Natural killer cell (primary cell): ENCODE measurements at regions of chr11 and their contacts with region 1.

Region 1: DNA sequence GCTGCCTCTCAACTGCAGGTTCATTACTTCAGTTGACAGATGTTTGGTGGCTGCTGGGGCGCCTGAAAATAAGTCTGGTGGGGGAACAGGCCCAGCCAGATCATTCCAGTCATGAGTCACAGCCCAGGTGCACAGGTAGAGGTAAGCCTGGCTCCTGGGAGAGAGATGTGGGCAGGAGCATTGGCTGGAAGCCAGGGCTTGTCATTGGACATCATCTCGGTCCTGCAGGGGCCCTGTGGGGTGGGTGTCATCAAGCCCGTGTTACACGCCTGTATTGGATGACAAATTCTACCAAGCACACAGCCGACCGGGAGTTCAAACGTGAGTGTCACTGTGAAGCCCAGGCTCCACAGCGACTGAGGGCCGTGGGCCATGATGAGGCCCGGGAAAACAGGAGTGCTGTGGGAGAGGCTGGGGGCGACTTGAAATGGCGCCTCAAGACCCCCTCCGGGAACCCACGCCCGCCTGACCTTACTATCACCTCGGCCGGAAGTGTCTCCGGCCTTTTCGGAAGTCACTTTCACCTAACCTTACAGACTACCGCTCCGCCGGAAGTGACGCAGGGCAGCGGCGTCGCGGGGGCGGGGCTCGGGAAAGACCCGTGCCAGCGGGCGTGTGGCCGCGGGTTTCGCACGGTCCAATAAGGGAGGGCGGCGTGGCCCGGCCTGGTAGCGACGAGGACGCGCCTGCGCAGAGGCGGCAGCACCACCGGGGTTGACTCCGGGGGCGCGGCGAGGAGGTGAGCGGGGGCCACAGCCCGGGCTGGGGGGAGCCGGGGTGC is at the start of gene FKBP2:
- DNase-seq: peak; percentile 98 to 99
- ATAC-seq: peak; percentile 65 to 84 (median 73)
- H3K4me3 ChIP-seq: peak within 1 kb of the TSS; percentile 79
- H3K4me3 Mint-ChIP-seq: peak within 1 kb of the TSS; percentile 96
- H3K27ac ChIP-seq: peak within 1 kb of the TSS; percentile 98
- H3K27ac Mint-ChIP-seq: peak within 1 kb of the TSS; percentile 98 to 99
- H3K4me1 ChIP-seq: peaks cover 66% of the 10 kb centered on the region
- H3K4me1 Mint-ChIP-seq: peaks cover 8 to 44% of the 10 kb centered on the region in 2 donors
- H3K27me3 ChIP-seq: no peaks in the 10 kb centered on the region
- H3K27me3 Mint-ChIP-seq: no peaks in the 10 kb centered on the region
- CTCF ChIP-seq: no peak
- total RNA-seq, gene FKBP2: 26.4 to 39.3 (median 30.3) TPM

Region 2: GRCh38 chr11:63961608-63962412 is 278.8 kb before region 1 on chr11:
- intact Hi-C with region 1: no loop called
- DNase-seq: peak; percentile 39 to 47
- ATAC-seq: peak; percentile 59 to 93 (median 85)
- H3K4me3 ChIP-seq: no peak overlapping the region
- H3K4me3 Mint-ChIP-seq: peak overlapping the region; percentile 75
- H3K27ac ChIP-seq: no peak overlapping the region
- H3K27ac Mint-ChIP-seq: peak overlapping the region in 1 of 2 donors; percentile 65
- H3K4me1 ChIP-seq: peaks cover 35% of the 10 kb centered on the region
- H3K4me1 Mint-ChIP-seq: peaks cover 21 to 27% of the 10 kb centered on the region in 2 donors
- H3K27me3 ChIP-seq: no peaks in the 10 kb centered on the region
- H3K27me3 Mint-ChIP-seq: peaks cover 0 to 6% of the 10 kb centered on the region in 2 donors
- CTCF ChIP-seq: no peak

Region 3: GRCh38 chr11:64185816-64186498 is 54.6 kb before region 1 on chr11 and contains the start of gene STIP1:
- intact Hi-C with region 1: loop called (anchors 1 kb)
- DNase-seq: peak; percentile 96 to 100
- ATAC-seq: peak; percentile 85 to 95 (median 86)
- H3K4me3 ChIP-seq: peak within 1 kb of the TSS; percentile 60
- H3K4me3 Mint-ChIP-seq: peak within 1 kb of the TSS; percentile 98
- H3K27ac ChIP-seq: peak within 1 kb of the TSS; percentile 66
- H3K27ac Mint-ChIP-seq: no peak within 1 kb of the TSS
- H3K4me1 ChIP-seq: peaks cover 20% of the 10 kb centered on the region
- H3K4me1 Mint-ChIP-seq: peaks cover 6 to 31% of the 10 kb centered on the region in 2 donors
- H3K27me3 ChIP-seq: no peaks in the 10 kb centered on the region
- H3K27me3 Mint-ChIP-seq: no peaks in the 10 kb centered on the region
- CTCF ChIP-seq: no peak
- total RNA-seq, gene STIP1: 80.9 to 110 (median 85.1) TPM

Region 4: DNA sequence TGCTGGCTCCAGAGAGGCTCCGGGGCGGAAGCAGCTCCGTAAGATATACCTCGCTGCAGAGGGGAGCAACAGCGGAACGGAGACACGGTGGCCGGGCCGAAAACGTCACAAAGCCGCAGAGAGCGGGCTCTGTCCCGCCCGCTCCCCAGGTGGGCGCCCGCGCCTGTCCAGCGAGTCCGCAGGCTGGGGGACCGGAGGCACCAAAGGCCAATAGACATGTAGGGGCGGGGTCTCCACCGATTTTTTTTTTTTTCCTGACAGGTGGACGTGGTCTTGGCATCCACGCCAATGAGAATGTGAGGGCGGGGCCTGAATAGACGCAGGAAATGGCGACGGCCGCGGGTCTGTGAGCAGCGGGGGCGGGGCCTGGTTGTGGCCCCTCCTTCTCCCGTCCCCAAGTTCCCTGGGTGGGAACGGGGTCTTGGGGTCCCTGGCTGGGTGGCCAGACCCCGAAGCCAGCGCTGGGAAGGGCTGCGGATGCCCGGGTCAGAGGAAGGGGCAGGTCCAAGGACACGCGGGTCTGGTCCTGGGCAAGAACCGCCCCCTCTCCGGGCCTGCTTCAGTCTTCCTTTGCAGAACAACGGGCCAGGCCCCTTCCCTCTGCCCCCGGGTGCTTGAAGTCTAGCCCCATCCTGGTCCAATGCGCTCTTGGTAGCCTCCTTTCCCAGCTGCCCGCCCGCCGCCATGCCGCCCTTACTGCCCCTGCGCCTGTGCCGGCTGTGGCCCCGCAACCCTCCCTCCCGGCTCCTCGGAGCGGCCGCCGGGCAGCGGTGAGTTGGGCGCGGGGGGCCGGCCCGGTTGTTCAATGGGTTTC is 10.2 kb before region 1 on chr11 and contains the start of gene DNAJC4:
- intact Hi-C with region 1: loop called (anchors 1 kb)
- DNase-seq: peak; percentile 86 to 92
- ATAC-seq: peak; percentile 64 to 78 (median 65)
- H3K4me3 ChIP-seq: peak within 1 kb of the TSS; percentile 93
- H3K4me3 Mint-ChIP-seq: peak within 1 kb of the TSS; percentile 94
- H3K27ac ChIP-seq: peak within 1 kb of the TSS; percentile 95
- H3K27ac Mint-ChIP-seq: peak within 1 kb of the TSS; percentile 93 to 97
- H3K4me1 ChIP-seq: peaks cover 66% of the 10 kb centered on the region
- H3K4me1 Mint-ChIP-seq: peaks cover 22 to 49% of the 10 kb centered on the region in 2 donors
- H3K27me3 ChIP-seq: no peaks in the 10 kb centered on the region
- H3K27me3 Mint-ChIP-seq: no peaks in the 10 kb centered on the region
- CTCF ChIP-seq: no peak
- total RNA-seq, gene DNAJC4: 45.0 to 47.0 (median 46.6) TPM

Region 5: DNA sequence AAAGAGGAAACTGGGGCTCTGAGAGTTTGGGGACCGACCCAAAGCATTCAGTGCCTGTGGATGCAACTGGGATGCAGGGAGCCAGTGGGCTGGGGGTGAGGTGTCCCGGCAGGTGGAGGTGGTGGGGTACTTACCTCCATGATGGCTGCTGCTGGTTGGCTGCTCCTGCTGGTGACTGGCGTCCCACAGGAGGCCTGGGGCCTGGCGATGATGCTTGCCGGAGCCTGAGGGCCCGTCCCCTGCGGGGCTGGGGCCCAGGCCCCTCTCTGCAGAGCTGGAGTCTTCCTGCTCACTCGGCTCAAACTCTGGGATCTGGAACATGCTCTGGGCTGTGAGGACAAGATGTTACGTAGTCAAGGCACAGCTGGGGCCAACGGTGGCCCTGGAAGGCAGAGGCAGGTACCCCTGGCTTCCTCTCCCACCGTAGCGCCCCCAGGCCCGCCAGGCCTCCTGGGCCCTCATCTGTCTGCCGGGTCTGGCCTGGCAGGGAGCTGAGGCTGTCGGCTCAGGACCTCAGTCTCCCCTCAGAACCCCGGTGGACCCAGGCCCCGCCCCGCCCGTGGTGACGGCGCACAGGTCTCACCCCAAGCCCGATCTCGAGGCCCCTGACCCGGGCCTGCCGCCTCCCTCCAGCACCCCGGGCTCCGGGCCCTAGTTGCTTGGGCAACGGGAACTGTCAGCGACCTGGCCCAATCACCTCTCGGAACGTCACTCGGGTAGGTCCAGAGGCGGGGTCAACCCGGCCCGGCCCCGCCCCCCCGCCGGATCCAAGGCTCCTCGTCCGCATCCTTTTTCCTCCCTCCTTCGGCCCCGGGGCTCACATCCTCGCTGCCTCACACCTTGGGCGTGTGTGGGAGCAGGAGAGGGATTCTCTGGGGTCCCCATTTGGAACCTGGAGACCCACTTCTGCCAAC is 43.7 kb after region 1 on chr11 and contains the start of gene BAD:
- intact Hi-C with region 1: loop called (anchors 1 kb)
- DNase-seq: peak; percentile 84 to 94
- ATAC-seq: peak; percentile 76 to 90 (median 78)
- H3K4me3 ChIP-seq: peak within 1 kb of the TSS; percentile 87
- H3K4me3 Mint-ChIP-seq: peak within 1 kb of the TSS; percentile 93
- H3K27ac ChIP-seq: peak within 1 kb of the TSS; percentile 99
- H3K27ac Mint-ChIP-seq: peak within 1 kb of the TSS; percentile 94 to 96
- H3K4me1 ChIP-seq: peaks cover 22% of the 10 kb centered on the region
- H3K4me1 Mint-ChIP-seq: peaks cover 12 to 16% of the 10 kb centered on the region in 2 donors
- H3K27me3 ChIP-seq: no peaks in the 10 kb centered on the region
- H3K27me3 Mint-ChIP-seq: no peaks in the 10 kb centered on the region
- CTCF ChIP-seq: no peak
- total RNA-seq, gene BAD: 30.6 to 35.8 (median 31.6) TPM